ENCODE measurements at regions of chr11 and their contacts with region 1.

Region 1: DNA sequence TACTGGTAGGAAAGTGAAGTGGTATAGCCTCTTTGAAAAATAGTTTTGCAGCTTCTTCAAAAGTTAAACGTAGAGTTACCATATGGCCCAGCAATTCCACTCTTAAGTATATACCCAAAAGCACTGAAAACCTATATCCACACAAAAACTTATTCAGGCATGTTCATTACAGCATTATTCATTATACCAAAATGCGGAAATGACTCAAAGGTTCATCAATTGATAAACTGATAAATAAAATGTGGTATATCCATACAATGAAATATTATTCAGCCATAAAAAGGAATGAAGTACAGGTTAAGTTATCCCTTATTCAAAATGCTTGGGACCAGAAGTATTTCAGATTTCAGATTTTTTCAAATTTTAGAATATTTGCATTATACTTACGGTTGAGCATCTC is 35.8 kb upstream of the UBASH3B start:
- DNase-seq: no peak
- H3K4me3 ChIP-seq: no peak overlapping the region
- H3K27ac ChIP-seq: no peak overlapping the region
- H3K27me3 ChIP-seq: no peaks in the 10 kb centered on the region
- CTCF ChIP-seq: no peak

Region 2: GRCh38 chr11:122584670-122585069 is 35.1 kb before region 1 on chr11:
- intact Hi-C with region 1: loop called in 1 of 2 experiments (anchors 5 kb)
- DNase-seq: no peak
- H3K4me3 ChIP-seq: no peak overlapping the region
- H3K27ac ChIP-seq: no peak overlapping the region
- H3K27me3 ChIP-seq: no peaks in the 10 kb centered on the region
- CTCF ChIP-seq: no peak

Region 3: DNA sequence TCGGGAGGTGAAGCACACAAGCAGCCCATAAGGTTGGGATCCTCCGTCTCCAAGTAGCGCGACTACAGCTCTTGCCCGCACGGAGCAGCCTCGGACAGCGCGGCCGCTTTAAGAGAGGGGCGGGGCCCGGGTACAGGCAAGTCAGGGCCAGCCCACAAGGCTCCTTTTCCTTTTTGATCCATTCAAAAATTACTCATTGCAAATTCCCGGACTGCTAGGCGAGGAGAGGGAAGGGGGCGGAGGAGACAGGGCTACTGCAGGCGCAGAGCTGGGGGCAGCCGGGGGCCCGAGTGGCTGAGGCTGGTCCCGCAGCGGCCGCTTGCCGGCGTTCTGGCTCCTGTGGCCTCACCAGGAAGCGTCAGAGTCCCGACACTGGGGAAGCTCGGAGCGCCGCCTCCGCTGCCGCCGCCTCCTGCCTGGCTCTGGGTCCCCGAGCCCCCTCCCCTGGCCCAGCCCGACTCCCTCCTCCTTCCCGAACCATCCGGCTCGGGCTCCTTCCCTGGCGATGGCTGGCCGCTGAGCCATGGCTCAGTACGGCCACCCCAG is 35.8 kb after region 1 on chr11 and contains the start of gene UBASH3B:
- intact Hi-C with region 1: no loop called
- DNase-seq: peak; percentile 50 to 88 (median 77)
- H3K4me3 ChIP-seq: peak within 1 kb of the TSS; percentile 62 to 97 (median 80)
- H3K27ac ChIP-seq: peak within 1 kb of the TSS in 57 of 59 donors; percentile 40 to 96 (median 84)
- H3K27me3 ChIP-seq: peaks cover 0 to 8% (median 0%) of the 10 kb centered on the region in 45 donors
- CTCF ChIP-seq: peak in 23 of 56 donors; percentile 3 to 45 (median 15)
- total RNA-seq, gene UBASH3B: 5.9 to 36.7 (median 18.6) TPM

Region 4: DNA sequence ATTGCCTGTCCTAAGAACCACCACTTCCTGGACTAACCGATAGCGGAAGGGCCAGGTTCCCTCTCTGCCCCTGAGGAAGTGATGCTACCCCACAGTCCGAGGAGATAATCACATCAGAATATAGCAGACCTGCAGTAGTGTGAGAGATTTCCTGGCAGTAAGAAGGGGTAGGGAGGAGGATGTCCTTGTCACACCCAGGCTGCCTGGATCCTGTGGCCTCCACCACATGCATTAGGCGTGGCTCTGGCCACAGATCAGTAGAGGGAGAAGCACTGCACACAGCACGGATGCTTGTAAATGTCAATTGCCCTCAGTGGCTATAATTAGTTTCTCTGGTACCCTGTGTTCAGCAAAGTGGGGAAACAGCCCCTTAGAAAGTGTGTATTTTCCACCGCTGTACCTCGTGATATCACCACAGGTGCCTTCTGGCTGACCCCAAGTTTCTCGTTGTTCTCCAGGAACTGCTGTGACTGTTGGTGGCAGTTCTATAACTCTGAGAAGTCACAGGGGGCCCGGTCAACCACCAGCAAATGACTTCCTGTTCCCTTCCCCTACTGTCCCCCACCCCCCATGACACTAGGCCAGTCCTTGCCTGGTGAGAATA is 97.6 kb after region 1 on chr11:
- intact Hi-C with region 1: no loop called
- DNase-seq: no peak
- H3K4me3 ChIP-seq: no peak overlapping the region
- H3K27ac ChIP-seq: peak overlapping the region in 7 of 59 donors; percentile 3 to 49 (median 13)
- H3K27me3 ChIP-seq: no peaks in the 10 kb centered on the region
- CTCF ChIP-seq: no peak